MCF 10A (cell line): ENCODE measurements at regions of chr14 and their contacts with region 1.

Region 1: DNA sequence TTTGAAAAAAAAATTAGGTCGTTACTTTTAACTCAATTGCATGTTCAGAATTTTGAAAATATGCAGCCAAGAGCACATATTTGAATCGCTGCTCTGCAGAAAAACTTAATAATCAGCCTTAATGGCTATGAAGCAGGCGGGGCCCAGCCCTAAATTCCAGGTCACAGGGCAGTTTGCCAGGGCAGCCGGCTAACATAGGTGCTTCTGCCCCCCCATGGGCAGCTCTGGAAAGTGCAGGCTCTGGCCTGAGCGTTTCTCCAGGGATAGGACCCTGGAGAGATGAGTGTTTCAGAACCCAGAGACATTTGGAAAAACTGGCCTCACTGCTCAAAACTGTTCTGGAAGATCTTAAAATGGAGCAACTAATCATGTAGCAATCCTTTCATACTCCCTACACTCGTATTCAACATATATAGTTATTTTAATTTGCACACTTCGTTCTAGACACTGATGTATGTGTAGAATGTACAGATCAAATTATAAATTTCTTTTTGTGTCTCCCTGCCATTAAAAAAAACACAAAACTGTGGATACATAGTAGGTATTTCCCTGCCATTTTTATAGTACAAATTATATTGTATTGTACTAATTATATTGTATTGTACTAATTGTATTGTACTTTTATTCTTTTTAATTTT is 26.0 kb upstream of the PTGR2 start:
- DNase-seq: peak; percentile 89
- H3K4me3 Mint-ChIP-seq: no peak overlapping the region
- H3K27ac Mint-ChIP-seq: no peak overlapping the region
- H3K4me1 Mint-ChIP-seq: peaks cover 19% of the 10 kb centered on the region
- H3K27me3 Mint-ChIP-seq: no peaks in the 10 kb centered on the region
- CTCF ChIP-seq: peak; percentile 89

Region 2: DNA sequence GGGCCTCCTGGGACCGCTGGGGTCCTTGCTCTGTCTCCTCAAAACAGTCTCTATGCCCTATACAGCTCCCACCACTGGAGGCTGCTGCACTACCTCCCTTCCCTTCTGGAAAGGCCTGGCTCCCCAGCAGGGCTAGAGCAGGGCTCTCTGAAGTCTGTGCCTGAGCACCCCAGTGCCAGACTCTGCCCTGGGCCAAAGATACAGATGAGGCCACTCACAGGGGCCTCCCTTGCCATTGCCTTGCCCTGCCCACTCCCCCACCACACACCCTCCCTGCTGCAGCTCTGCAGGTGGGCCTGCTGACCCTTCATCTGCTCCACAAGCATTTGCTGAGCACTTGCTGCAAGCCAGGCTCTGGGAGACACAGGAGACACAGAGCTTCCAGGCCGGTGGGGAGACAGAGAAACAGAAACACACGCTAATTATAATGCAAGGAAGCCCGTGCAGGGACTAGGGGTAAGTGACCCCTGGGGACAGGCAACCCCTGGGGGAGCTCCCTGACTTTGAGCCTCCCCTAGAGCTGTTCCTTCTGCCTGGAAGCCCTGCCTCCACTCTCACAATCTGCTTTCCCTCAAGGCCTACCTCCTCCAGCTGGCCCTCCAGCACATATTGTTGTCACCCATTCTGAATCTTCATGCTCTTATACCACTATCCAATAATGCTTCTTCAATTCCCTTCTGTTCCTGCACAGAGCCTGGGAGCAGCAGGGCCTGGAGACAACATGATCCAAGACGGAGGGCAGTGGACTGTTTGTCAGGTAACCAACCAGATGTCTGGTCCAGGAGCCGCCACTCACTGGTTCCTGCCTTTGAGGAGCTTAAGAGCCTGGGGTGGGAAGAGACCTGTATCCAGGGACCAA is 78.9 kb before region 1 on chr14:
- CTCF ChIA-PET with region 1: interaction called, 6 read pairs
- POLR2A ChIA-PET with region 1: interaction called, 15 read pairs
- intact Hi-C with region 1: loop called (anchors 5 kb)
- DNase-seq: no peak
- H3K4me3 Mint-ChIP-seq: no peak overlapping the region
- H3K27ac Mint-ChIP-seq: peak overlapping the region; percentile 42
- H3K4me1 Mint-ChIP-seq: peaks cover 72% of the 10 kb centered on the region
- H3K27me3 Mint-ChIP-seq: no peaks in the 10 kb centered on the region
- CTCF ChIP-seq: no peak

Region 3: DNA sequence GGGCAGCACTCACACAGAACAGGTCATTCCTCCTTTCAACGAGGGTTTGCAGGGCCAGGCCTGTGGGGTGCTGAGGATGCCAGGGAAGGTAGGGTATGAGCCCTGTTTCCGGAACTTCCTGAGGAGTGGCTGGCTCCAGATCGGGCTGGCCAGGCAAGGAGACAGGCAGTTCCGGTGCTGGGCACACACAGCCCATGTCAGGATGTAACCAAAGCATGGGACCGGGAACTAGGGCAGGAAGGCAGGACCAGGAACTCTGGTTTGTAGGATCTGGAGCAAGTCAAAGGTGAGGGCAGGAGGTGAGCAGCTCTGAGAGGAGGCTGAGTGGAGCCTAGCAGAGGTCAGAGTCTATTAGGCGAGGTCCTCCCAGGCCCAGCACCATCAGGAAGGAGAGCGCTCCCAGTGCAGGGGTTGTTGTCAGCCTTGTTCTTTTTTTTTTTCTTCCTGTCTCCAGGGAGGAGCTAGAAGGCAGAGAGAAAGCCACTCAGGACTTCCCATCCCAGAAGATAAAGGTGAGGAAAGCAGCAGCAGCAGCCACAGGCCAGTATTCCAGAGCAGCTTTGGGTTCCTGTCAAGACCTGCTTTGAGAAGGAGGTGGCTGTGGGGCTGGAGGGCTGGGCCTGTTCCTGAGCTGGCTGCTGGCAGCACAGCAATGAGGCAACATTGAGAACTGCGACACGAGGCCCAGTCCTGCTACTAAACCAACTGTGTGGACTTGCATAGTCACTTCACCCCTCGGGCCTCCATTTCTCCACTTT is 23.1 kb before region 1 on chr14:
- CTCF ChIA-PET with region 1: interaction called, 3 read pairs
- POLR2A ChIA-PET with region 1: interaction called, 82 read pairs
- intact Hi-C with region 1: no loop called
- DNase-seq: peak; percentile 80
- H3K4me3 Mint-ChIP-seq: peak overlapping the region; percentile 47
- H3K27ac Mint-ChIP-seq: peak overlapping the region; percentile 86
- H3K4me1 Mint-ChIP-seq: peaks cover 25% of the 10 kb centered on the region
- H3K27me3 Mint-ChIP-seq: no peaks in the 10 kb centered on the region
- CTCF ChIP-seq: no peak

Region 4: GRCh38 chr14:73977600-73978295 is 152.1 kb after region 1 on chr14:
- CTCF ChIA-PET with region 1: no interaction called
- POLR2A ChIA-PET with region 1: no interaction called
- intact Hi-C with region 1: no loop called
- DNase-seq: no peak
- H3K4me3 Mint-ChIP-seq: no peak overlapping the region
- H3K27ac Mint-ChIP-seq: peak overlapping the region; percentile 55
- H3K4me1 Mint-ChIP-seq: no peaks in the 10 kb centered on the region
- H3K27me3 Mint-ChIP-seq: no peaks in the 10 kb centered on the region
- CTCF ChIP-seq: no peak

Region 5: GRCh38 chr14:74029136-74029535 is 203.5 kb after region 1 on chr14:
- CTCF ChIA-PET with region 1: no interaction called
- POLR2A ChIA-PET with region 1: no interaction called
- intact Hi-C with region 1: no loop called
- DNase-seq: no peak
- H3K4me3 Mint-ChIP-seq: no peak overlapping the region
- H3K27ac Mint-ChIP-seq: no peak overlapping the region
- H3K4me1 Mint-ChIP-seq: no peaks in the 10 kb centered on the region
- H3K27me3 Mint-ChIP-seq: no peaks in the 10 kb centered on the region
- CTCF ChIP-seq: no peak